Dendritic cell treated with granulocyte-macrophage colony-stimulating factor and Interleukin-4, amounts not matched to agents 40 ng/mL and 50 ng/mL, for 4 days (primary cell): ENCODE measurements at regions of chr2 and their contacts with region 1.

Region 1: GRCh38 chr2:11234309-11234708 is 79.0 kb downstream of the SLC66A3 start:
- H3K4me3 Mint-ChIP-seq: no peak overlapping the region
- H3K27ac Mint-ChIP-seq: no peak overlapping the region
- H3K4me1 Mint-ChIP-seq: no peaks in the 10 kb centered on the region
- H3K27me3 Mint-ChIP-seq: no peaks in the 10 kb centered on the region

Region 2: DNA sequence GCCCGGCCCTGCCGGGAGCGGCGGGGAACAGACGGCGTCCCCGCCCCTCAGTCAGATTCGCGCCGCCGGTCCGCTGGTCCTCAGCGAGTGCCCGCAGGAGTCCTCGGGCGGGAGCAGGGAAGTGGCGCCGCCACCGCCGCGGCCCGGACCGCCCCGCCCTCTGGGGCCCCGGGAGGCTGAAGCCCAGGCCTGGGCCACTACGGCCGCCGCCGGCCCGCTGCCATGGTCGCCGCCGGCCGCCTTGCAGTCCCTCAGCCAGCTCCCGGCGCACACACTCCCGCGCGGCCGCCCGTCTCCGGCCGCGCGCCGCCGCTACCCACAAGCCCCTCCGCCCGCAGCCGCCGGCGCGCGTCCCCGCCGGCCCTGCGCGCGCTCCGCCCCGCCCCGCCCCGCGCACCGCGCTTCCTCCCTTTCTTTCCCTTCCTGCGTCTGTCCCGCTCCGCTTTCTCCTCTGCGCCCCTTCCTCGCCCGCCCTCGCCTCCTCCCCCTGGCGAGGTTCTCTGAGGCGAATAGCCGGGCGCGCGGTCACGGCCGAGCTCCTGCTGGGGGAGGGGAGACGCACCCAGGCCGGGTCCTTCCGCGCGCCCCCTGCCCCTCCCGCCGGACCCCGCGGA is 110.1 kb after region 1 on chr2 and contains the start of gene ROCK2:
- intact Hi-C with region 1: loop called (anchors 10 kb)
- H3K4me3 Mint-ChIP-seq: peak within 1 kb of the TSS; percentile 87
- H3K27ac Mint-ChIP-seq: peak within 1 kb of the TSS; percentile 92
- H3K4me1 Mint-ChIP-seq: peaks cover 22% of the 10 kb centered on the region
- H3K27me3 Mint-ChIP-seq: no peaks in the 10 kb centered on the region

Region 3: GRCh38 chr2:11411768-11412448 is 177.6 kb after region 1 on chr2:
- intact Hi-C with region 1: loop called (anchors 5 kb)
- H3K4me3 Mint-ChIP-seq: peak overlapping the region; percentile 39
- H3K27ac Mint-ChIP-seq: no peak overlapping the region
- H3K4me1 Mint-ChIP-seq: no peaks in the 10 kb centered on the region
- H3K27me3 Mint-ChIP-seq: peaks cover 13% of the 10 kb centered on the region